B cell (primary cell): ENCODE measurements at regions of chr6 and their contacts with region 1.

Region 1: GRCh38 chr6:99467509-99468106 is 42.5 kb upstream of the PNISR start:
- DNase-seq: peak; percentile 48
- ATAC-seq: peak; percentile 17
- H3K4me3 ChIP-seq: no peak overlapping the region
- H3K4me3 Mint-ChIP-seq: no peak overlapping the region
- H3K27ac ChIP-seq: no peak overlapping the region
- H3K27ac Mint-ChIP-seq: no peak overlapping the region
- H3K4me1 ChIP-seq: no peaks in the 10 kb centered on the region
- H3K4me1 Mint-ChIP-seq: no peaks in the 10 kb centered on the region
- H3K27me3 ChIP-seq: no peaks in the 10 kb centered on the region
- H3K27me3 Mint-ChIP-seq: no peaks in the 10 kb centered on the region
- CTCF ChIP-seq: peak; percentile 92

Region 2: DNA sequence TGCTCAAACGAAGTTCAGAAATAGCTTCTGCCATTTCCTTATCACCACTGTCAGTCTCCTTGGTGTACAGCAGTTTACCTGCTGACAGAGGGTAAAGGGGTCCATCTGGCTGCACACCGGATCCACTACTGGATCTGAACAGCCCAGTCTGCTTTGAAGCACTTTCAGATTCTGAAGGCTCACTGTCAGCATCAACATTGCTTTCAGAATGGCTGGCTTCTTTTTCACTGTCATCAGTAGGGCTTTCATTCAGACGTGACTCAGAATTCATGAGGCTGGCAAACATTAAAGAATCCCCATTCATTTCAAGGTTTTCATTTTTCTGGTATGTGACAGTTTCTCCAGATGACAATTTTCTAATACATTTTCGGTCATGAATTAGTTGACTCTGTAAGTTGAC is 21.5 kb before region 1 on chr6:
- CTCF ChIA-PET with region 1: no interaction called
- POLR2A ChIA-PET with region 1: no interaction called
- intact Hi-C with region 1: no loop called
- DNase-seq: no peak
- ATAC-seq: no peak
- H3K4me3 ChIP-seq: no peak overlapping the region
- H3K4me3 Mint-ChIP-seq: no peak overlapping the region
- H3K27ac ChIP-seq: no peak overlapping the region
- H3K27ac Mint-ChIP-seq: no peak overlapping the region
- H3K4me1 ChIP-seq: peaks cover 0 to 11% of the 10 kb centered on the region in 2 donors
- H3K4me1 Mint-ChIP-seq: peaks cover 18% of the 10 kb centered on the region
- H3K27me3 ChIP-seq: no peaks in the 10 kb centered on the region
- H3K27me3 Mint-ChIP-seq: no peaks in the 10 kb centered on the region
- CTCF ChIP-seq: no peak

Region 3: GRCh38 chr6:99568103-99568933 is 100.7 kb after region 1 on chr6 and contains the start of gene CCNC:
- CTCF ChIA-PET with region 1: interaction called, 6 read pairs
- POLR2A ChIA-PET with region 1: no interaction called
- intact Hi-C with region 1: loop called (anchors 5 kb)
- DNase-seq: peak; percentile 93
- ATAC-seq: peak; percentile 96
- H3K4me3 ChIP-seq: peak within 1 kb of the TSS; percentile 53 to 97 (median 90)
- H3K4me3 Mint-ChIP-seq: peak within 1 kb of the TSS; percentile 95
- H3K27ac ChIP-seq: peak within 1 kb of the TSS; percentile 78 to 87
- H3K27ac Mint-ChIP-seq: peak within 1 kb of the TSS; percentile 93
- H3K4me1 ChIP-seq: peaks cover 10 to 14% of the 10 kb centered on the region in 2 donors
- H3K4me1 Mint-ChIP-seq: peaks cover 31% of the 10 kb centered on the region
- H3K27me3 ChIP-seq: no peaks in the 10 kb centered on the region
- H3K27me3 Mint-ChIP-seq: no peaks in the 10 kb centered on the region
- CTCF ChIP-seq: no peak
- total RNA-seq, gene CCNC: 45.1 and 47.9 TPM in 2 replicates

Region 4: DNA sequence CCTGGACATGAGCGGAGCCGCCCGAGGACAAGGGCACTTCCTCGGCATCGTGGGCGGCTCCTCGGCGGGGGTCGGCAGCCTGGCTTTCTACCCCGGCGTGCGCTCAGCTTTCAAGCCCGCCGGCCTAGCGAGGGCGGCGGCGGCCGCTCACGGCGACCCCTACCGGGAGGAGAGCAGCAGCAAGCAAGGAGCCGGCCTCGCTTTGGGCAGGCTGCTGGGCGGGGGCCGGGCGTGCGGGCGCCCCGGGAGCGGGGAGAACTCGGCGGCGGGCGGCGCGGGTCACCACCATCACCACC is 145.7 kb after region 1 on chr6:
- CTCF ChIA-PET with region 1: interaction called, 3 read pairs
- POLR2A ChIA-PET with region 1: no interaction called
- intact Hi-C with region 1: loop called (anchors 5 kb)
- DNase-seq: peak; percentile 72
- ATAC-seq: peak; percentile 64
- H3K4me3 ChIP-seq: peak overlapping the region in 4 of 5 experiments; percentile 23 to 68 (median 52)
- H3K4me3 Mint-ChIP-seq: peak overlapping the region; percentile 86
- H3K27ac ChIP-seq: no peak overlapping the region
- H3K27ac Mint-ChIP-seq: no peak overlapping the region
- H3K4me1 ChIP-seq: peaks cover 21 to 30% of the 10 kb centered on the region in 2 donors
- H3K4me1 Mint-ChIP-seq: peaks cover 9% of the 10 kb centered on the region
- H3K27me3 ChIP-seq: peaks cover 0 to 80% (median 73%) of the 10 kb centered on the region in 4 experiments
- H3K27me3 Mint-ChIP-seq: peaks cover 75% of the 10 kb centered on the region
- CTCF ChIP-seq: peak; percentile 50

Region 5: GRCh38 chr6:99822741-99823512 is 355.3 kb after region 1 on chr6:
- CTCF ChIA-PET with region 1: no interaction called
- POLR2A ChIA-PET with region 1: no interaction called
- intact Hi-C with region 1: no loop called
- DNase-seq: peak; percentile 5
- ATAC-seq: no peak
- H3K4me3 ChIP-seq: no peak overlapping the region
- H3K4me3 Mint-ChIP-seq: peak overlapping the region; percentile 26
- H3K27ac ChIP-seq: no peak overlapping the region
- H3K27ac Mint-ChIP-seq: no peak overlapping the region
- H3K4me1 ChIP-seq: no peaks in the 10 kb centered on the region
- H3K4me1 Mint-ChIP-seq: peaks cover 7% of the 10 kb centered on the region
- H3K27me3 ChIP-seq: peaks cover 0 to 19% (median 7%) of the 10 kb centered on the region in 4 experiments
- H3K27me3 Mint-ChIP-seq: peaks cover 27% of the 10 kb centered on the region
- CTCF ChIP-seq: no peak

Region 6: DNA sequence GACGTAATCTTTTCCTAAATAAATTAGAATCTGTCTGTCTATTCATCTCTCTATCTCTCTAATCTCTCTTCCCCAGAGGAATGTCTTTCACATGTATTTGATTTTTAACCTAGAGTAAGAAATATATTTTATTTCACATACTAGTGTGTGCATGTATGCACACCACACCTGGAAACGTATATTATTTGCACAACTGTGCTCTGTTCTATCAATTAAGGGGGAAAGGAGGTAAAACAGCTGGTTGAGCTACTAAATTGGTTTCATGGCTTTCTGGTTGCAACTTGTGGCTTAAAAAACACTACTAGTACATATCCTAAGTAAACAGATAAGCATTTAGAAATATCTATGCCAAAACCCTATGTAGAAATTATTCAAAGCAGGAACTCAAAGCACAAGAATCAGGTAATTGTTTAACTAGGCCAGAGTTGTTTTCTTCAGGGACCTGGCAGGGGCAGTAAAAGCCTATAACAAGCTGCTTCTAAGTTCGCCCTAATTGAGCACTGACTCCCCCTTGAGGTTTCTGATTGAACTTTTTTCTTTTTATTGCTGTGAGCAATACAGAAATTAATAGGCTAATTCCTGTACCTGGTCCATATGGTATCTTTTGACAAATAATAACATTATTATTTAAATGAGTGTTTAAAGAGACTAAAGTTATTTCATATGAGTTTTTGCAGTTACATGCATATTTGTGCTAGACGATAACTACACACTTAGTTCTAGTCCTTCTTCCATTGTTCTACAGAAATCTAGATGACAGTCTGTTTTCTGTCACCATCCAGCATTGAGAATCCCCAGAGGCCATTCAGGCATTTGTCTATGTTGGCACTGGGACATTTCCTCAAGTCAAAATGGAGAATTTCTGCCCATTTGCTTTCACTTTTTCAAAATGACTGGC is 437.9 kb after region 1 on chr6:
- CTCF ChIA-PET with region 1: no interaction called
- POLR2A ChIA-PET with region 1: no interaction called
- intact Hi-C with region 1: loop called (anchors 5 kb)
- DNase-seq: peak; percentile 10
- ATAC-seq: no peak
- H3K4me3 ChIP-seq: no peak overlapping the region
- H3K4me3 Mint-ChIP-seq: no peak overlapping the region
- H3K27ac ChIP-seq: no peak overlapping the region
- H3K27ac Mint-ChIP-seq: no peak overlapping the region
- H3K4me1 ChIP-seq: no peaks in the 10 kb centered on the region
- H3K4me1 Mint-ChIP-seq: no peaks in the 10 kb centered on the region
- H3K27me3 ChIP-seq: no peaks in the 10 kb centered on the region
- H3K27me3 Mint-ChIP-seq: peaks cover 9% of the 10 kb centered on the region
- CTCF ChIP-seq: peak; percentile 62